CD8-positive, alpha-beta T cell (primary cell): ENCODE measurements at regions of chr6 and their contacts with region 1.

Region 1: GRCh38 chr6:157274471-157275226 is 48.7 kb downstream of the TMEM242 start:
- DNase-seq: peak; percentile 70 to 95 (median 85)
- ATAC-seq: peak; percentile 79
- H3K4me3 ChIP-seq: peak overlapping the region; percentile 71 to 81
- H3K4me3 Mint-ChIP-seq: peak overlapping the region; percentile 91
- H3K27ac ChIP-seq: peak overlapping the region; percentile 82 to 91
- H3K27ac Mint-ChIP-seq: peak overlapping the region; percentile 96
- H3K4me1 ChIP-seq: peaks cover 11% of the 10 kb centered on the region
- H3K4me1 Mint-ChIP-seq: peaks cover 7% of the 10 kb centered on the region
- H3K27me3 ChIP-seq: no peaks in the 10 kb centered on the region
- H3K27me3 Mint-ChIP-seq: no peaks in the 10 kb centered on the region
- CTCF ChIP-seq: peak; percentile 76

Region 2: GRCh38 chr6:157021344-157021992 is 253.2 kb before region 1 on chr6:
- CTCF ChIA-PET with region 1: no interaction called
- POLR2A ChIA-PET with region 1: interaction called, 3 read pairs
- intact Hi-C with region 1: loop called in 1 of 2 experiments (anchors 5 kb)
- DNase-seq: peak; percentile 75 to 93 (median 89)
- ATAC-seq: peak; percentile 75
- H3K4me3 ChIP-seq: peak overlapping the region; percentile 66 to 93
- H3K4me3 Mint-ChIP-seq: peak overlapping the region; percentile 95
- H3K27ac ChIP-seq: peak overlapping the region; percentile 96 to 98
- H3K27ac Mint-ChIP-seq: peak overlapping the region; percentile 100
- H3K4me1 ChIP-seq: peaks cover 8% of the 10 kb centered on the region
- H3K4me1 Mint-ChIP-seq: peaks cover 59% of the 10 kb centered on the region
- H3K27me3 ChIP-seq: no peaks in the 10 kb centered on the region
- H3K27me3 Mint-ChIP-seq: no peaks in the 10 kb centered on the region
- CTCF ChIP-seq: no peak

Region 3: DNA sequence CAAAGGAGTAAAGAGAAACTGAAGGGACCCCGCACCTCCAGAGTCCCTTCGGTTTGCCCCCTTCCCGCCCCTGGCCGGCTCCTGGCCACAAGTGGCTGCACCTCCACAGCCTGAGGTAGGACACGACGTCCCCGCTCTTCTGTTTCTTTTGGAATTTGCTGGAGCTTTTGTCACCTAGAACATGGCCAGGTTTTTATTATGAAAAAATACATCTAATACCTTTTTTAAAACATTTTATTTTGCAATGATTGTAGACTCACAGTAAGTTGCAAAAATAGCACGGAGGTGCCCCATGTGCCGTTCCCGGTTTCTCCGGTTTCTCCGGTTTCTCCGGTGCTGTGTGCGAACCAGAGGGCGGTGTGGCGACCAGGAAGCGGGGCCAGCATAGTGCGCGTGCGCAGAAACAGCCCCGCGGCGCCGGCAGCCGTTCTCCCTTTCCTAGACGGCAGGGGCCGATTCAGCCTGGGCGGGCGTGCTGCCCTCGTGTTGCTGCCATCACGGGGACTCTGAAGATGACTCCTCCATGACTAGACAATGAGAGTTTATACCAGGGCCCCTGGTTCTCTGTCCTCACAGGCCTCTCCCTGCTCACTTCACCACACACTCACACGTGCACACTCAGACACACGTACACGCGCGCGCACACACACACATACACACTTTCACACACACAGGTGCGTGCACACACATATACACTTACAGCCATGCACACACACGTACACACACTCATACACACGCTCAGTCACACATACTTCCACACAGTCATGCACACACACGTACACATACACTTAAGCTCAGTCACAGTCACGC is 53.4 kb before region 1 on chr6:
- CTCF ChIA-PET with region 1: interaction called, 7 read pairs
- POLR2A ChIA-PET with region 1: no interaction called
- intact Hi-C with region 1: loop called (anchors 1 to 2 kb)
- DNase-seq: peak; percentile 66 to 90 (median 82)
- ATAC-seq: peak; percentile 91
- H3K4me3 ChIP-seq: peak overlapping the region; percentile 60 to 68
- H3K4me3 Mint-ChIP-seq: peak overlapping the region; percentile 82
- H3K27ac ChIP-seq: peak overlapping the region in 1 of 2 experiments; percentile 36
- H3K27ac Mint-ChIP-seq: peak overlapping the region; percentile 41
- H3K4me1 ChIP-seq: peaks cover 28% of the 10 kb centered on the region
- H3K4me1 Mint-ChIP-seq: peaks cover 24% of the 10 kb centered on the region
- H3K27me3 ChIP-seq: no peaks in the 10 kb centered on the region
- H3K27me3 Mint-ChIP-seq: no peaks in the 10 kb centered on the region
- CTCF ChIP-seq: no peak

Region 4: GRCh38 chr6:157284738-157285421 is 10.2 kb after region 1 on chr6:
- CTCF ChIA-PET with region 1: interaction called, 5 read pairs
- POLR2A ChIA-PET with region 1: interaction called, 5 read pairs
- intact Hi-C with region 1: loop called in 1 of 2 experiments (anchors 1 kb)
- DNase-seq: peak in 1 of 9 experiments; percentile 43
- ATAC-seq: no peak
- H3K4me3 ChIP-seq: no peak overlapping the region
- H3K4me3 Mint-ChIP-seq: no peak overlapping the region
- H3K27ac ChIP-seq: no peak overlapping the region
- H3K27ac Mint-ChIP-seq: no peak overlapping the region
- H3K4me1 ChIP-seq: no peaks in the 10 kb centered on the region
- H3K4me1 Mint-ChIP-seq: no peaks in the 10 kb centered on the region
- H3K27me3 ChIP-seq: no peaks in the 10 kb centered on the region
- H3K27me3 Mint-ChIP-seq: no peaks in the 10 kb centered on the region
- CTCF ChIP-seq: no peak

Region 5: GRCh38 chr6:157379656-157380454 is 105.2 kb after region 1 on chr6:
- CTCF ChIA-PET with region 1: no interaction called
- POLR2A ChIA-PET with region 1: no interaction called
- intact Hi-C with region 1: loop called (anchors 2 kb)
- DNase-seq: peak; percentile 76 to 92 (median 89)
- ATAC-seq: peak; percentile 79
- H3K4me3 ChIP-seq: peak overlapping the region; percentile 92 to 96
- H3K4me3 Mint-ChIP-seq: peak overlapping the region; percentile 83
- H3K27ac ChIP-seq: peak overlapping the region; percentile 68 to 80
- H3K27ac Mint-ChIP-seq: peak overlapping the region; percentile 64
- H3K4me1 ChIP-seq: peaks cover 10% of the 10 kb centered on the region
- H3K4me1 Mint-ChIP-seq: peaks cover 20% of the 10 kb centered on the region
- H3K27me3 ChIP-seq: no peaks in the 10 kb centered on the region
- H3K27me3 Mint-ChIP-seq: no peaks in the 10 kb centered on the region
- CTCF ChIP-seq: no peak